Activated CD4-positive, alpha-beta memory T cell treated with anti-CD3 and anti-CD28 coated beads for 36 hours (primary cell): ENCODE measurements at regions of chr11 and their contacts with region 1.

Region 1: GRCh38 chr11:34926101-34926830 is 9.8 kb downstream of the PDHX start:
- DNase-seq: no peak
- H3K4me3 Mint-ChIP-seq: no peak overlapping the region
- H3K27ac Mint-ChIP-seq: no peak overlapping the region
- H3K4me1 Mint-ChIP-seq: peaks cover 16% of the 10 kb centered on the region
- H3K27me3 Mint-ChIP-seq: no peaks in the 10 kb centered on the region

Region 2: DNA sequence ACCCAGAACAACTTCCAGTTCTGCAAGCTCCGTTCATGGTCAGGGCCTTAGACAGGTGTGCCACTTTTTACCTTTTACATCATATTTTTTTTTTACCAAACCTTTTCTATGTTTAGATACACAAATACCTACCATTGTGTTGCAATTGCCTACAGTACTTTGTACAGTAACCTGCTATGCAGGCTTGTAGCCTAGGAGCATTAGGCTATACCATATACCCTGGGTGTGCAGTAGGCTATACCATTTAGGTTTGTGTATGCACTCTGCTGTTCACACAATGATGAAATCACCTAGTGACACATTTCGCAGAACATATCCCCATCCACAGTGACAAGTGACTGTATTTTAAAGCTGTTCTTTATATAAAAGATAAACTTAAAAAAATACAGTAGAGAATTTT is 39.7 kb before region 1 on chr11:
- CTCF ChIA-PET with region 1: no interaction called
- POLR2A ChIA-PET with region 1: no interaction called
- intact Hi-C with region 1: no loop called
- DNase-seq: no peak
- H3K4me3 Mint-ChIP-seq: no peak overlapping the region
- H3K27ac Mint-ChIP-seq: no peak overlapping the region
- H3K4me1 Mint-ChIP-seq: no peaks in the 10 kb centered on the region
- H3K27me3 Mint-ChIP-seq: no peaks in the 10 kb centered on the region

Region 3: DNA sequence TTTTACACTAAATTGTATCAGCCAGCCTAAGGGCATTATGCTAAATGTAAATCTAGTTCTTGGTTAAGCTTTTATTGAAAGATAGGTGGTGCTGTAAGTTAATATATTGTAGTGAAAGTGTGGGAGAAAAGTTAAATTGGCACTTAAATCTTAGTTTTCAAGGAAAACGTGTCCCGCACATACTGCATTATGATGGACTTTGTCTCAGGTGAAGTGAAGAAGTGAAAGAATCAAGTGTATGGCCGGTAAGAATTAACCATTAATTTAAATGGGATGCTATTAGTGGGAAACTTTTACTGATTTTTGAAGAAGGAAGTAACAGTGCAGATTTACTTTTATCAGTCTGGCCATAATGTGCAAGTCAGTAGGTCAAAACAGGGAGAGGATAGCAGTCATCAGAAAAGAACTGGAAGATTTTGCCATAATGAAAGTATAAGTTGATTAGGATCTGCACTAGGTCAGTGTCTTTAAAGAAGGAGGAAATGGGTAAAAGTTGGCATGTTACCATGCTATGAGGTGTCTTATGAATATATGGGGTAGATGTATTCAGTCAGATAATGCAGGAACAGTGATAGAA is 71.8 kb after region 1 on chr11:
- CTCF ChIA-PET with region 1: interaction called, 3 read pairs
- POLR2A ChIA-PET with region 1: no interaction called
- intact Hi-C with region 1: loop called (anchors 5 kb)
- DNase-seq: no peak
- H3K4me3 Mint-ChIP-seq: peak overlapping the region; percentile 7
- H3K27ac Mint-ChIP-seq: peak overlapping the region; percentile 25
- H3K4me1 Mint-ChIP-seq: peaks cover 19% of the 10 kb centered on the region
- H3K27me3 Mint-ChIP-seq: no peaks in the 10 kb centered on the region

Region 4: GRCh38 chr11:35305670-35306382 is 379.6 kb after region 1 on chr11:
- CTCF ChIA-PET with region 1: interaction called, 15 read pairs
- POLR2A ChIA-PET with region 1: no interaction called
- intact Hi-C with region 1: no loop called
- DNase-seq: peak; percentile 35
- H3K4me3 Mint-ChIP-seq: no peak overlapping the region
- H3K27ac Mint-ChIP-seq: no peak overlapping the region
- H3K4me1 Mint-ChIP-seq: peaks cover 19% of the 10 kb centered on the region
- H3K27me3 Mint-ChIP-seq: no peaks in the 10 kb centered on the region

Region 5: GRCh38 chr11:35334385-35335090 is 408.3 kb after region 1 on chr11:
- CTCF ChIA-PET with region 1: no interaction called
- POLR2A ChIA-PET with region 1: no interaction called
- intact Hi-C with region 1: no loop called
- DNase-seq: peak; percentile 30
- H3K4me3 Mint-ChIP-seq: no peak overlapping the region
- H3K27ac Mint-ChIP-seq: no peak overlapping the region
- H3K4me1 Mint-ChIP-seq: peaks cover 64% of the 10 kb centered on the region
- H3K27me3 Mint-ChIP-seq: peaks cover 2% of the 10 kb centered on the region

Region 6: GRCh38 chr11:35485656-35486322 is 559.5 kb after region 1 on chr11:
- CTCF ChIA-PET with region 1: interaction called, 9 read pairs
- POLR2A ChIA-PET with region 1: no interaction called
- intact Hi-C with region 1: loop called (anchors 1 kb)
- DNase-seq: peak; percentile 81
- H3K4me3 Mint-ChIP-seq: no peak overlapping the region
- H3K27ac Mint-ChIP-seq: no peak overlapping the region
- H3K4me1 Mint-ChIP-seq: no peaks in the 10 kb centered on the region
- H3K27me3 Mint-ChIP-seq: peaks cover 40% of the 10 kb centered on the region